ENCODE measurements at regions of chr5 and their contacts with region 1.

Region 1: DNA sequence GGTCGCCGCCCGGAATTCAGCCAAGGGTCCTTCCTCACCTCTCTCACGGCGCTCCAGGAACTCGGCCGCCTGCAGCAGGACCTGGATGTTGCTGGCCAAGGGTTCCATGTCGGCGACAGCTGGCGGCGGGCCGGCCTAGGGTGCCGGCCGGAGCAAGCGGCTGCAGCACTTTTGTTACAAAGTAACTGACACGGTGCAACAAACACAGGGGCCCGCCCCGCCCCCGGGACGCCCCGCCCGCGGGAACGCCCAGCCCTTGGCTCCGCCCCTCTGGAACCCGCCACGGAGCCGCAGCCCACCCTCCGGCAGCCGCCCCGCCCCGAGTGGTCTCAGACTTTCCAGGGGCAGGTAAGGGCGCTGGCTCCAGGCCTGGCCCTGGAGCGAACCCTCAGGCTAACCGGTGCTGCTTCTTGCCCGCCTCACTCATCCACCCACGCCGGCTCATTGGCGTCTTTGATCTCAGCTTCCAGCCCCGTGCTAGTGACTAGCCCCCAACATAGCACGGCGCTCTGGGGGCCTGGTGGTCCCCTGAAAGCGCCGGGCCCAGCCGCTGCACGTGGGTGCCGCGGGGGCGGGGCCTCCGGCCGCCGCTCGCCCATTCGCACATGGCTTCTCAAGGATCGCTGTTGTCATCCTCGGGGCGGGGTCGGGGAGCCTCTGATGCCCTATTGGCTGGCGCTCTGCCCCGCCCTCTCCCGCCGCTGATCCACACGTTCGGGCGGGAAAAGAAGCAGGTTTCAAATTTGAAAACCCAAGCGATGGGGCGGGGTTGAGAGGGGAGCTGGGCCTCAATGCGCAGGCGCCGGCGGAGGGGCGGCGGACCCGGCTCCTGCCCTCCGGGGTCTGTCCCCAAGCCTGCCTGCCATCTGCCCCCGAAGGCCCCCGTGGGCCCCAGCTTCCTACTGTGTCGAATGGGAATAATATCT is at the start of gene MXD3:
- DNase-seq: peak; percentile 98
- H3K4me3 ChIP-seq: peak within 1 kb of the TSS; percentile 2 to 76 (median 41)
- H3K27ac ChIP-seq: peak within 1 kb of the TSS; percentile 63 to 70 (median 67)
- H3K4me1 ChIP-seq: peaks cover 20 to 35% (median 27%) of the 10 kb centered on the region in 4 donors
- H3K27me3 ChIP-seq: no peaks in the 10 kb centered on the region
- CTCF ChIP-seq: no peak
- EP300 ChIP-seq: no peak
- POLR2A ChIP-seq: no peak
- total RNA-seq, gene MXD3: 10.8 to 257 (median 21.7) TPM

Region 2: GRCh38 chr5:176774216-176775170 is 537.5 kb before region 1 on chr5:
- in situ Hi-C with region 1: no loop called
- intact Hi-C with region 1: no loop called
- DNase-seq: no peak
- H3K4me3 ChIP-seq: no peak overlapping the region
- H3K27ac ChIP-seq: no peak overlapping the region
- H3K4me1 ChIP-seq: no peaks in the 10 kb centered on the region
- H3K27me3 ChIP-seq: peaks cover 32% of the 10 kb centered on the region
- CTCF ChIP-seq: no peak
- EP300 ChIP-seq: no peak
- POLR2A ChIP-seq: no peak

Region 3: GRCh38 chr5:176965633-176966032 is 346.4 kb before region 1 on chr5:
- in situ Hi-C with region 1: no loop called
- intact Hi-C with region 1: no loop called
- DNase-seq: no peak
- H3K4me3 ChIP-seq: no peak overlapping the region
- H3K27ac ChIP-seq: no peak overlapping the region
- H3K4me1 ChIP-seq: peaks cover 0 to 11% (median 0%) of the 10 kb centered on the region in 4 donors
- H3K27me3 ChIP-seq: no peaks in the 10 kb centered on the region
- CTCF ChIP-seq: no peak
- EP300 ChIP-seq: no peak
- POLR2A ChIP-seq: no peak

Region 4: DNA sequence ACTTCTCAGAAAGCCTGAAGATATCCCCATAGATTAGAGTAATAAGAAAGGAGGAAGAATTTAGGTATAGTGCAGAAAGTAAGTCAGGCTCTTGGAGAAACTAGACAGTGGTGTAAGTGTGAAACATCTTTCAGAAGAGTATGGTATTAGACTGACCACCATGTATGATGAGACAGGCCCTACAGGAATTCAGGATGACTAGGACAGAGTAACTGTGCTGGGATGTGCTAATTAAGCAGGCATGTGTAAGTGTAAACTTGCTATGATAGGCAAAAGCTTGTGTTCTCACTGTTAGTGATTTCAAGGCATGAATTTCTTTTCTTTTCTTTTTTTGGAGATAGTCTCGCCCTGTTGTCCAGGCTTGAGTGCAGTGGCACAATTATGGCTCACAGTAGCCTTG is 79.2 kb before region 1 on chr5:
- in situ Hi-C with region 1: no loop called
- intact Hi-C with region 1: loop called (anchors 2 kb)
- DNase-seq: no peak
- H3K4me3 ChIP-seq: no peak overlapping the region
- H3K27ac ChIP-seq: peak overlapping the region in 2 of 4 donors; percentile 22 to 28
- H3K4me1 ChIP-seq: peaks cover 6 to 15% (median 8%) of the 10 kb centered on the region in 4 donors
- H3K27me3 ChIP-seq: no peaks in the 10 kb centered on the region
- CTCF ChIP-seq: no peak
- EP300 ChIP-seq: no peak
- POLR2A ChIP-seq: no peak